Activated CD4-positive, alpha-beta T cell treated with anti-CD3 and anti-CD28 coated beads, Interleukin-2, amount 10 ng/mL, durations not matched to agents 24 days and 14 days (primary cell): ENCODE measurements at regions of chr9 and their contacts with region 1.

Region 1: GRCh38 chr9:125241000-125241862 is at the start of gene HSPA5:
- DNase-seq: peak; percentile 100
- H3K4me3 Mint-ChIP-seq: peak within 1 kb of the TSS; percentile 93
- H3K27ac Mint-ChIP-seq: peak within 1 kb of the TSS; percentile 98
- H3K4me1 Mint-ChIP-seq: peaks cover 34% of the 10 kb centered on the region
- H3K27me3 Mint-ChIP-seq: peaks cover 2% of the 10 kb centered on the region
- total RNA-seq, gene HSPA5: 260 and 271 TPM in 2 replicates

Region 2: DNA sequence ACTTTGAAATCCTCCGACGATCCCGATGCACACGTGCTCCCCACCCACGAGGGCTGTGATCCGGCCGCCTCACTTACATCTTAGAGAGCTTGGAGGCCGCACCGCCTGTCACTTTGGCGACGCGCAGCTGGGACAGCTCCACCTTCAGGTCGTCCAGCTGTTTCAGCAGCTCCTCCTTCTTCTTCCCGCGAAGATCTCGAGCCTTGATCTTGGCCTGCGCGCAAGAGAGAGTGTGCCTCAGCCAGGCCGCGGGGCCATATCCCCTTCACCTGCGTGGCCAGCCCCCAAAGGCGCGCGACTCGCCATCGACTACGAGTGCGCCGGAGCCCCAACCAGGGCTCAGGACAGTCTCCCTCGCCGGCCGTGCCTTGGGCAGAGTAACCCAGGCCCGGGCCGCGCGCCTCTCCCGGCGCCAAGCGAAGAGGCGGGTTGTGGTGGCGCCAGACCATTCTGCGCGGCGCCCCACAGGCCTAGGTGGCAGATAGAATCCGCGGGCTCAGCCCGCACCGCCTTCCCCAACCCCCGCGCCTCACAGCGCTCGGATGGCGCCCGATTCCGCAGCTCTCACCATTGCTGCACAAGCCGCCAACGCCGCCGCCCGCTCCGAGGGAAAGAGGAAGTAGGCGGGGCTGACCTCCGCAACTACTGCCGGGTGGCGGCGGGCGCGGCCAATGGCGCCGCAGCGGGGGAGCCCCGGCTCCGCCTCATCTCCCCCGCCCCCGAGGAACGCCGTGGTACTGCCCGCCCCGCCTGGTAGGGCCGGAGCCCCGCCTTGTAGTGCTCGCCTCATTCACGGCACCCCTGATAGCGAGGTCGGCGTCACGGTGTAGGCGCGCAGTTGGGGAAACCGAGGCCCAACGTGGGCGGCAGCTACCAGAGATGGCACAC is 379.6 kb before region 1 on chr9 and contains the starts of genes ARPC5L and RPL35:
- intact Hi-C with region 1: loop called (anchors 1 kb)
- DNase-seq: peak; percentile 99
- H3K4me3 Mint-ChIP-seq: peak within 1 kb of the TSS; percentile 98
- H3K27ac Mint-ChIP-seq: peak within 1 kb of the TSS; percentile 98
- H3K4me1 Mint-ChIP-seq: peaks cover 21% of the 10 kb centered on the region
- H3K27me3 Mint-ChIP-seq: no peaks in the 10 kb centered on the region
- total RNA-seq, gene ARPC5L: 99.8 and 103 TPM in 2 replicates
- total RNA-seq, gene RPL35: 1,878 and 1,905 TPM in 2 replicates

Region 3: DNA sequence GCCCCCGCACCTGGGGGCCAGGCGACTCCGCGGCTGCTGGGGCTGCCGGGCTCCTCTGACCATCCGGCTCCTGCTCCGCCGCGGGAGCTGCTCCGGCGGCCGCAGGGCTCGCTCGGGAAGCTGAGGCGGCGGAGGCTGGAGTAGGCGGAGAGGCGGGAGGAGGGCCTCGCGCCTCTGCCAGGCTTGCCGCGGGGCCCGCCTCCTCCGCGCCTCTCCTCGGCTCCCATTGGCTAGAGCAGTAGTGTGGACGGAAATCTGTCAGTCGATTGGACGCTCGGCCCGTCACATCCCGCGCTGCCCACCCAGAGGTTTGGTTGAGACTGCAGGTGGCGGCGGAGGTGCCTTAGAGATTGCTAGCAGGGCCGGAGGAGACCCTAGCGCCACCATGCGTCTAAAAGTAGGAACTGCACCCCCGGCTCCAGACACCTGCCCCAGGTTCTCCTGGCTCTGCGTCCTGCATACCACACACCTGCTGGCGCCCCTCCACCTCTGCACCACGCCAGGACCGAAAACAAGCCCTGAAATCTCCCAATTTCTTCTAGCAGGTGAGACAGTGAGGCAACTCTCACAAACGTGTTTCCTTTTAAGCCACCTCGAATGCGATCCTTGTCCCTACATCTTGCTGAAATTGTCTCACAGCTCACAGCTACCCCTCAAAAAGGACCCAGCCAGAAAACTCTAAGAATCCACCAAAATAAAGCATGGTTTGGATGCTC is 97.7 kb before region 1 on chr9 and contains the start of gene SCAI:
- intact Hi-C with region 1: loop called (anchors 5 kb)
- DNase-seq: peak; percentile 99
- H3K4me3 Mint-ChIP-seq: peak within 1 kb of the TSS; percentile 100
- H3K27ac Mint-ChIP-seq: peak within 1 kb of the TSS; percentile 95
- H3K4me1 Mint-ChIP-seq: peaks cover 33% of the 10 kb centered on the region
- H3K27me3 Mint-ChIP-seq: no peaks in the 10 kb centered on the region
- total RNA-seq, gene SCAI: 11.0 and 13.4 TPM in 2 replicates

Region 4: GRCh38 chr9:125200210-125201047 is 40.8 kb before region 1 on chr9 and contains the start of gene RABEPK:
- intact Hi-C with region 1: loop called (anchors 1 kb)
- DNase-seq: peak; percentile 98
- H3K4me3 Mint-ChIP-seq: peak within 1 kb of the TSS; percentile 95
- H3K27ac Mint-ChIP-seq: peak within 1 kb of the TSS; percentile 92
- H3K4me1 Mint-ChIP-seq: peaks cover 14% of the 10 kb centered on the region
- H3K27me3 Mint-ChIP-seq: peaks cover 5% of the 10 kb centered on the region
- total RNA-seq, gene RABEPK: 36.6 and 37.7 TPM in 2 replicates

Region 5: DNA sequence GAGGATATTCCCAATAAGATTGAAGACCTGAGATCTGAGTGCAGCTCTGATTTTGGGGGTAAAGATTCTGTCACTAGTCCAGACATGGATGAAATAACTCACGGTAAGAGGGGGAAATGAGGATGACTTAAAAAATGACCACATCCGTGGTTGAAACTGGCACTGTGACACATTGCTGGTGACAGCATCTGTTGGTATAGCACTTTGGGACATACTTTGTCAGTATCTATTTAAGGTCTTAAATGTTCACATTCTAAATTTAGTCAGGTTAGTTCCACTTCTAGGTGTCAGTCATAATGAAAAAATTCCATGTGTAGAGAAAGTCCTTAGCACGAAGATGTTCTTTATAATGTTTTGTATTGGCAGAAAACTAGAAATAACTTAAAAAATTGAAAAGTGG is 91.3 kb after region 1 on chr9:
- intact Hi-C with region 1: loop called (anchors 2 kb)
- DNase-seq: peak; percentile 60
- H3K4me3 Mint-ChIP-seq: no peak overlapping the region
- H3K27ac Mint-ChIP-seq: peak overlapping the region; percentile 7
- H3K4me1 Mint-ChIP-seq: peaks cover 12% of the 10 kb centered on the region
- H3K27me3 Mint-ChIP-seq: no peaks in the 10 kb centered on the region